Activated T-helper 2 cell treated with anti-CD3 and anti-CD28 coated beads, Interferon-gamma antibody, Interleukin-2, Interleukin-4, amounts not matched to agents 10 μg/mL and 5 μg/mL and 100 μg/mL, durations not matched to agents 14 hours and 24 hours and 36 hours (primary cell): ENCODE measurements at regions of chr12 and their contacts with region 1.

Region 1: GRCh38 chr12:30754709-30755394 is at the start of gene CAPRIN2:
- DNase-seq: peak; percentile 92
- H3K4me3 Mint-ChIP-seq: peak within 1 kb of the TSS; percentile 88
- H3K27ac Mint-ChIP-seq: peak within 1 kb of the TSS; percentile 18
- H3K4me1 Mint-ChIP-seq: peaks cover 33% of the 10 kb centered on the region
- H3K27me3 Mint-ChIP-seq: no peaks in the 10 kb centered on the region
- total RNA-seq, gene CAPRIN2: 13.5 and 14.2 TPM in 2 replicates

Region 2: DNA sequence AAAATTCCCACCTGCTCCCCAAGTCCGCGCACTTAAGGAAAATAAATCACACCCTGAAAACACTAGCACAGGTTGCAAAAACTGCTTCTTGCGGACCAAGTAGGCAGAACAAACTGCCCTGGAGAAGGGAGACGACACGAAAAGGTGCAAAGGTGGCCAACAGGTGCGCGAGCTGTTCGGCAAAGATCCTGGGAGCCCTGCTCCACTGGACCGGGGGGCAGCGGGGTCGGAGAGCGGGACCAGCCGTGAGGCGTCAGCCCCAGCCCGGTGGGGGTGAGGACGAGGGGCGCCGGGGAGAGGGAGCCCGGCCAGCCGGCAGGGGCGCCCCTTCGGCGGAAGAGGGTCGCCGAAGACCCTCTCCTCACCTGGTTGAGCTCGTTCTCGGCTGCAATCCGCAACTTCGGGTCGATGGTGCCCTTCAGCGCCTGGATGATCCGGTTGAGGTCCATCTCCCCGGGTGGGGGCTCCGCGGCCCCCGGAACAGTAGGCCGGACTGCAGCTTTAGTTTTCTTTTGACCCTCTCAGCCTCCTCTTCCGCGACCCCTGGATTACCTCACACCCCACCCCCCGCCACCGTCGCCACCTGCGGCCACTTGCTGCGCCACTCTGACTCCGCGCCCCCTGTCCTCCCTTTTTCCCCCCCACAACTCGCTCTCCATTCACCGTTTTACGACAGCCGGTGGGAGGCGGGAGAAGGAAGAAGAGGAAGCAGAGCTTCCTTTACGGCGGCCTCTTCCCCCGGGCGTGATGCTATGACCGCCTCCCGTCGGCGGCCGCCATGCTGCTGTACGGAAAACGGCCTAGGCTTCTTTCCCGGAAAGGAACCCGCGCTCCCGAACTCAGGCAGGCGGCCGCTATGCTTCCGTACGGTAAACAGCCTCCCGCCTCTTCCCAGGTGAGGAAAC is 59.4 kb before region 1 on chr12 and contains the start of gene IPO8:
- intact Hi-C with region 1: loop called (anchors 1 kb)
- DNase-seq: peak; percentile 75
- H3K4me3 Mint-ChIP-seq: peak within 1 kb of the TSS; percentile 91
- H3K27ac Mint-ChIP-seq: peak within 1 kb of the TSS; percentile 88
- H3K4me1 Mint-ChIP-seq: peaks cover 30% of the 10 kb centered on the region
- H3K27me3 Mint-ChIP-seq: peaks cover 8% of the 10 kb centered on the region
- total RNA-seq, gene IPO8: 40.1 and 44.3 TPM in 2 replicates

Region 3: GRCh38 chr12:30795410-30796312 is 40.8 kb after region 1 on chr12:
- intact Hi-C with region 1: loop called (anchors 1 kb)
- DNase-seq: peak; percentile 54
- H3K4me3 Mint-ChIP-seq: peak overlapping the region; percentile 82
- H3K27ac Mint-ChIP-seq: peak overlapping the region; percentile 85
- H3K4me1 Mint-ChIP-seq: peaks cover 22% of the 10 kb centered on the region
- H3K27me3 Mint-ChIP-seq: peaks cover 28% of the 10 kb centered on the region

Region 4: GRCh38 chr12:31057671-31058070 is 302.8 kb after region 1 on chr12:
- intact Hi-C with region 1: loop called (anchors 5 kb)
- DNase-seq: no peak
- H3K4me3 Mint-ChIP-seq: no peak overlapping the region
- H3K27ac Mint-ChIP-seq: no peak overlapping the region
- H3K4me1 Mint-ChIP-seq: peaks cover 4% of the 10 kb centered on the region
- H3K27me3 Mint-ChIP-seq: no peaks in the 10 kb centered on the region